Left lung (tissue), 14 donors: ENCODE measurements at regions of chr2 and their contacts with region 1.

Region 1: DNA sequence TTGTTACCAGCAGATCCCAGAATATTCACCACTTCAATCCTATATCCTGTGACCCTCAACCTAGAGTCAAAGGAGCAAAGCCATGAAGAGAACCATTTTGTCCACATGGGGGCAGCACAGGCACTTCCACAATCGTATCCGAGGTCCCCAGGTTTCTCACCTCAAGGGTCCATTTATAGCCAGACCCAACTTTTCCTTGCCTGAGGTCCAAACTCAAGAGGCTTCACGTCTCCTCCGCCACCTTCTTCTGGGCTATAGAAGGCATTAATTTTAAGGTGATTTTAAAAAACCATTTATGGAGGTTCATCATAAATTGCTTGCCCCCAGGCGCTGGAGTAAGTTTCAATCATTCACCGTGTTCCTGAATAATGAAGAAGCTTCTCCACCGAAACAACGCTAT is 111.6 kb upstream of the NABP1 start:
- DNase-seq: peak in 2 of 4 donors; percentile 44 to 54
- ATAC-seq: peak; percentile 94
- H3K4me3 ChIP-seq: no peak overlapping the region
- H3K27ac ChIP-seq: no peak overlapping the region
- H3K4me1 ChIP-seq: peaks cover 0 to 27% of the 10 kb centered on the region in 2 donors
- H3K27me3 ChIP-seq: no peaks in the 10 kb centered on the region
- CTCF ChIP-seq: peak; percentile 62 to 81

Region 2: GRCh38 chr2:190254063-190254850 is 1312.1 kb before region 1 on chr2:
- intact Hi-C with region 1: no loop called
- DNase-seq: no peak
- ATAC-seq: no peak
- H3K4me3 ChIP-seq: no peak overlapping the region
- H3K27ac ChIP-seq: no peak overlapping the region
- H3K4me1 ChIP-seq: no peaks in the 10 kb centered on the region
- H3K27me3 ChIP-seq: no peaks in the 10 kb centered on the region
- CTCF ChIP-seq: no peak

Region 3: GRCh38 chr2:191679818-191680600 is 113.7 kb after region 1 on chr2:
- intact Hi-C with region 1: loop called in 1 of 2 experiments (anchors 10 kb)
- DNase-seq: no peak
- ATAC-seq: no peak
- H3K4me3 ChIP-seq: peak overlapping the region in 1 of 2 donors; percentile 70
- H3K27ac ChIP-seq: peak overlapping the region; percentile 97 to 99
- H3K4me1 ChIP-seq: peaks cover 11 to 83% of the 10 kb centered on the region in 2 donors
- H3K27me3 ChIP-seq: no peaks in the 10 kb centered on the region
- CTCF ChIP-seq: no peak

Region 4: GRCh38 chr2:191691016-191691735 is 124.8 kb after region 1 on chr2:
- intact Hi-C with region 1: loop called (anchors 5 to 10 kb)
- DNase-seq: peak in 1 of 4 donors; percentile 71
- ATAC-seq: peak; percentile 85
- H3K4me3 ChIP-seq: no peak overlapping the region
- H3K27ac ChIP-seq: peak overlapping the region in 1 of 2 donors; percentile 20
- H3K4me1 ChIP-seq: peaks cover 7 to 39% of the 10 kb centered on the region in 2 donors
- H3K27me3 ChIP-seq: no peaks in the 10 kb centered on the region
- CTCF ChIP-seq: peak; percentile 57 to 62